ENCODE measurements at regions of chr6 and their contacts with region 1.

Region 1: DNA sequence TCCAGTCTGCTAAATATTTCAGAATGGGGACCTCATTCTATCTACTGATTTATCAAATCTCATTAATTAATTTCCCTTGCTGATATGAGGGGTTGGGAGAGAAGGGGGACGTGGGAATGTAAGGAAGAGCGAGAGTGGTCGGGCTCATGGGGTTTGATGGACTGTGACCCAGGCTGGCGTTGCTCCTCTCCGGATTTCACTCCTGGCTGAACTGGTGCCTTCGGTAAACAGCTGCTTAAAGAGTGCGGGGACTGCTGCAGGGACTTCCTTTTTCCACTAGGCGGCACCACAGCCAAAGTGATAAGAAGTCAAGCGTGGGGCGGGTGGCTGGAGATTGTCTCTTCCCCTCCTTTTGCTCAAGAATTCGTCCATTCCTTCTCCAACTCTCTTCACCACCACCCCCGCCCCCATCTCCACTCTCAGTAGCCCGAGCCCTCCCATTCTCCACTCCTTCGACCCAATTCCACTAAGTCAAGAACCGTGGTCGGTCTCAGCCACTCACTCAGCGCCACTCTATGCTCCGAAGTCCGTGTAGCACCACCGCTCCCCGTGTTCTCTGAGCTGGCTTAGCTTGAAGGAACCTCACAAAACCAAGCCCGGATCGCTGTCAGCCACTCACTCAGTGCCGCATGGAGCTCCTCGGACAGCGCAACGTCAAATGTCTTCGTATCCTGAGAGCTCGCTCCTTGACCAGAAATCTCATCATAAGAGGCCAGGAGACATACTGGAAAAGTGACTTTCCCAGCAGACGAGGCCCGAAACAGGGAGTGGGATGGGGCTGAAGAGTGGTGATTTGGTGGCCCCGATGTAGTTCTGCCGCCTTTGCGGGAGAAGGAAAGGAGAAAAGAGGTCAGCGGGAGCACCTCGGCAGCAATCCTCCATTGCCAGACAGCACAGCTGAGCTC is 9.7 kb downstream of the TRIM31 start:
- DNase-seq: peak; percentile 61 to 87 (median 83)
- ATAC-seq: peak; percentile 92
- H3K4me3 ChIP-seq: peak overlapping the region; percentile 68
- H3K4me3 Mint-ChIP-seq: peak overlapping the region; percentile 86 to 95 (median 91)
- H3K27ac ChIP-seq: peak overlapping the region; percentile 49
- H3K27ac Mint-ChIP-seq: peak overlapping the region; percentile 48 to 92 (median 85)
- H3K4me1 ChIP-seq: peaks cover 24 to 30% of the 10 kb centered on the region in 2 donors
- H3K4me1 Mint-ChIP-seq: peaks cover 36 to 51% (median 43%) of the 10 kb centered on the region in 7 donors
- H3K27me3 ChIP-seq: peaks cover 5 to 10% of the 10 kb centered on the region in 2 donors
- H3K27me3 Mint-ChIP-seq: peaks cover 25 to 69% (median 34%) of the 10 kb centered on the region in 5 donors

Region 2: GRCh38 chr6:29847871-29848630 is 255.2 kb before region 1 on chr6:
- CTCF ChIA-PET with region 1: no interaction called
- POLR2A ChIA-PET with region 1: no interaction called
- intact Hi-C with region 1: loop called in 1 of 2 experiments (anchors 1 kb)
- DNase-seq: peak; percentile 71 to 87 (median 80)
- ATAC-seq: peak; percentile 90
- H3K4me3 ChIP-seq: no peak overlapping the region
- H3K4me3 Mint-ChIP-seq: peak overlapping the region in 5 of 10 donors; percentile 5 to 49 (median 16)
- H3K27ac ChIP-seq: no peak overlapping the region
- H3K27ac Mint-ChIP-seq: peak overlapping the region in 1 of 9 donors; percentile 14
- H3K4me1 ChIP-seq: no peaks in the 10 kb centered on the region
- H3K4me1 Mint-ChIP-seq: peaks cover 0 to 24% (median 13%) of the 10 kb centered on the region in 7 donors
- H3K27me3 ChIP-seq: peaks cover 9 to 13% of the 10 kb centered on the region in 2 donors
- H3K27me3 Mint-ChIP-seq: peaks cover 54 to 73% (median 67%) of the 10 kb centered on the region in 5 donors

Region 3: GRCh38 chr6:30066577-30067459 is 36.4 kb before region 1 on chr6 and contains the start of gene PPP1R11:
- CTCF ChIA-PET with region 1: interaction called, 14 read pairs
- POLR2A ChIA-PET with region 1: interaction called, 36 read pairs
- intact Hi-C with region 1: loop called (anchors 1 kb)
- DNase-seq: peak; percentile 84 to 100 (median 99)
- ATAC-seq: peak; percentile 99
- H3K4me3 ChIP-seq: peak within 1 kb of the TSS; percentile 94
- H3K4me3 Mint-ChIP-seq: peak within 1 kb of the TSS; percentile 87 to 100 (median 98)
- H3K27ac ChIP-seq: peak within 1 kb of the TSS; percentile 96
- H3K27ac Mint-ChIP-seq: peak within 1 kb of the TSS; percentile 96 to 100 (median 99)
- H3K4me1 ChIP-seq: peaks cover 28 to 41% of the 10 kb centered on the region in 2 donors
- H3K4me1 Mint-ChIP-seq: peaks cover 43 to 77% (median 71%) of the 10 kb centered on the region in 7 donors
- H3K27me3 ChIP-seq: no peaks in the 10 kb centered on the region
- H3K27me3 Mint-ChIP-seq: peaks cover 10 to 22% (median 16%) of the 10 kb centered on the region in 5 donors
- total RNA-seq, gene PPP1R11: 49.4 to 67.1 (median 62.7) TPM

Region 4: DNA sequence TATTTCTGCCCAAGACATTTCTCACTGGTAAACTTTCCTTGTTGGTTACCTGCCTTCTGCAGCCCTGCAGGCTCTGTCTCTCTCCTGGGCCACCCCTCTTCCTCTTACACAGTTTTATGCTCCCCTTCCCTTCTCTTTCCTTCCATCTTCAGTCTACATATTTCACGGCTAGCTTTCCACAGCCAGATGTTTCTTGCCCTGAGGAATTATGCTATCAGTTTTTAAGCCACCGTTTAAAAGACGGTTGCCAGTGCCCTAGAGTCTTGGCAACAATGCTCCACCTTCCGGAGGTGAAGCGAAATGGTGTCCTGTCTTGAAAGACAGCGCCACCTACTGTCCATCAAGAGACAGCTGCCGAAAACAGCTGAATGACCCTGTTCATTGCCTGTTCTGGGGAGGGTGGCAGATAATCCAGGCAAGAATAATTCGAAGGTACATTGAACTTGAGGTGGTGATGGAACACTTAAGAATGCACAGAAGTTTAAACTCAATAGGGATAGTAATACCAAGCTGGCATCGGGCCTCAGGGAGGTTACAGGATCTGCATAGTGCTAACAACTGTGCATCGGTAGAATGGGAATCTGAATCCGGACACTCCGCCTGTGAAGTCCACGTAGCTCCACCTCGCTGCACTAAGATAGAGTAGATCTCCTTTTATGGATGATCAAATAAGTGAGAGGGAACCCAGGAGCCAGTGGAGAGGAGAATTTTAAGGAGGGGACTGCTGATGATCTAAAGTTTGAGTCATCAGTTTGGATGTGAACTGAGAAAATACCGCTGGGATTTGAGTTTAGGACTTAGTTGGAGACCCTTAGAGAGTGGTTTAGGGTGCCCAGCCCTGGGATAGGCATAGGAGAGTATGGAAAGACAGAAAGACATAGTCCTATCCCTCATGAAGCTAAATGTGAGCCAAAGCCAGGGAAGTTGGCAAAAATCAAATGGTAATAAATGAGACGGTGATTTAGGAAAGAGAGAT is 28.0 kb after region 1 on chr6:
- CTCF ChIA-PET with region 1: interaction called, 170 read pairs
- POLR2A ChIA-PET with region 1: interaction called, 29 read pairs
- intact Hi-C with region 1: loop called (anchors 1 kb)
- DNase-seq: peak; percentile 21 to 83 (median 76)
- ATAC-seq: peak; percentile 99
- H3K4me3 ChIP-seq: no peak overlapping the region
- H3K4me3 Mint-ChIP-seq: peak overlapping the region in 6 of 10 donors; percentile 2 to 44 (median 30)
- H3K27ac ChIP-seq: no peak overlapping the region
- H3K27ac Mint-ChIP-seq: peak overlapping the region in 3 of 9 donors; percentile 2 to 79 (median 7)
- H3K4me1 ChIP-seq: peaks cover 0 to 4% of the 10 kb centered on the region in 2 donors
- H3K4me1 Mint-ChIP-seq: peaks cover 3 to 23% (median 6%) of the 10 kb centered on the region in 7 donors
- H3K27me3 ChIP-seq: peaks cover 5 to 12% of the 10 kb centered on the region in 2 donors
- H3K27me3 Mint-ChIP-seq: peaks cover 63 to 83% (median 67%) of the 10 kb centered on the region in 5 donors

Region 5: DNA sequence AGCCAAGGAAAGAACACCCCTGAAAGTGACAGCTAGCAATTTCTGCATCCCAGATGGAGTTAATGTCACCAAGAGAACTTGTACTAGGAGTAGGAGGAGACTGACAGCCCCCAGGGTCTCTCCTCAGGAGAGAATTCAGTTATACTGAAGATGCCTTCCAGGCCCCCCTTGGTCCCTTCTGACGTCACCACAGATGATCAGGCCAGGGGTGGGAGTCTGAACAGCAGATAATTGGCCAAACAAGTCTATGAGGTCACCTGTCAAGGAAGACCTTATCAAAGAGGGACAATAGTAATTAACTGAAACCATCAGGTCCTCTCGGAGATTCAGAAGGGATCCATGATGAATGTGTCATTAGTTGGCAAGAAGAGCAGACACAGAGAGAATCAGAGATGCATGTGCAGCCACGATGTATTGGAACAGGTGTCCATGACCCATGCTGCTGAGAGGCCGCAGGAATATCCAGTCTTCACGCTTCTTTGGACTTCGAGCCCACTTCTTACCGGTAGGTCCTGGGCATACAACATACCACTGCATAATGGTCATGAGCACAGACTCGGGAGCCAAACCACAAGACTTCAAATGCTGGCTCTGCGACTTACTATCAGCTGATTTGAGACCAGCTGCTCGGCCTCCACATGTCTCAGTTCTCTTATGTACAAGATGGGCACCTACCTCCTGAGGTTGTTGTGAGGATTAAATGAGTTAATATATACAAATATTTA is 47.6 kb after region 1 on chr6:
- CTCF ChIA-PET with region 1: no interaction called
- POLR2A ChIA-PET with region 1: no interaction called
- intact Hi-C with region 1: no loop called
- DNase-seq: no peak
- ATAC-seq: no peak
- H3K4me3 ChIP-seq: no peak overlapping the region
- H3K4me3 Mint-ChIP-seq: no peak overlapping the region
- H3K27ac ChIP-seq: no peak overlapping the region
- H3K27ac Mint-ChIP-seq: no peak overlapping the region
- H3K4me1 ChIP-seq: no peaks in the 10 kb centered on the region
- H3K4me1 Mint-ChIP-seq: peaks cover 0 to 12% (median 4%) of the 10 kb centered on the region in 7 donors
- H3K27me3 ChIP-seq: no peaks in the 10 kb centered on the region
- H3K27me3 Mint-ChIP-seq: peaks cover 10 to 47% (median 26%) of the 10 kb centered on the region in 5 donors

Region 6: DNA sequence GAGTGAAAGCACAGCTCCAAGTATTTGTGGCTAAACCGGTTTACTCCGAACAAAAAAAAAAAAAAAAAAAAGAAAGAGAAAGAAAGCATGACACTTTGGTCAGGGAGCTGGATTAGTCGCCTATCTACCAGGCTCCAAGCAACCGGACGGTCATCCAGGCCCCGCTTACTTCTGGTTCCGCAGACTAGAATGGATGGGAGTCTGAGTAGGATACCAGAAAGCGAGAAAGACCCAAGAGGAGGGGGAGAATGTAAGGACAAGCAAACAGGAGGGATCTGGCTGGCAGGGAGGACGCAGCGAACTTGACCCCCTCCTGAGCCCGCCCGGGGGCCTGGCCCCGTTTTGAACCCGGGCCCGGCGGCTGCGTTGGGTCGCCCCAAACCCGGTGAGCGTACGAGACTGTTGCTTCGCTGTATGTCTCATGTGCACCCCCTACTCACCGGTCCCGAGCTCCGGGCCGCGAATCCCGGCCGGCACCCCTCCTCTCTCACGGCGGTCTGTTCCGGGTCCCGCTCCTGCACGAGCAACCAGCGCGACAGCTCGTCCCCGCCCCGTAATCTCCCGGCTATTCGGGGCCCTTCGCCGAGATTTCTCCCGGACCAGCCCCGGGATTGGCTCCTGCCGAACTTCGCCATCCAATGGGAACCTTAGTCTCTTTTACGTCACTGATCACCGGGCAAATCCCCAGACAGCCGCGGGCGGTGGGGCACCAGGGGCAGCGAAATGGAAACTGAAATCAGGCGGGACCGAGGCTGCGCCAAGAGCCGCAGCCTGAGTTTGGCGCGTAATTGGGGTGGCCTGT is 109.8 kb after region 1 on chr6 and contains the start of gene TRIM26:
- CTCF ChIA-PET with region 1: no interaction called
- POLR2A ChIA-PET with region 1: interaction called, 5 read pairs
- intact Hi-C with region 1: loop called (anchors 1 to 5 kb)
- DNase-seq: peak; percentile 88 to 99 (median 97)
- ATAC-seq: peak; percentile 94
- H3K4me3 ChIP-seq: peak within 1 kb of the TSS; percentile 83
- H3K4me3 Mint-ChIP-seq: peak within 1 kb of the TSS; percentile 89 to 100 (median 96)
- H3K27ac ChIP-seq: peak within 1 kb of the TSS; percentile 99
- H3K27ac Mint-ChIP-seq: peak within 1 kb of the TSS; percentile 96 to 100 (median 99)
- H3K4me1 ChIP-seq: peaks cover 32 to 39% of the 10 kb centered on the region in 2 donors
- H3K4me1 Mint-ChIP-seq: peaks cover 47 to 62% (median 52%) of the 10 kb centered on the region in 7 donors
- H3K27me3 ChIP-seq: no peaks in the 10 kb centered on the region
- H3K27me3 Mint-ChIP-seq: peaks cover 0 to 5% (median 0%) of the 10 kb centered on the region in 5 donors
- total RNA-seq, gene TRIM26: 40.1 to 73.1 (median 49.1) TPM

Region 7: DNA sequence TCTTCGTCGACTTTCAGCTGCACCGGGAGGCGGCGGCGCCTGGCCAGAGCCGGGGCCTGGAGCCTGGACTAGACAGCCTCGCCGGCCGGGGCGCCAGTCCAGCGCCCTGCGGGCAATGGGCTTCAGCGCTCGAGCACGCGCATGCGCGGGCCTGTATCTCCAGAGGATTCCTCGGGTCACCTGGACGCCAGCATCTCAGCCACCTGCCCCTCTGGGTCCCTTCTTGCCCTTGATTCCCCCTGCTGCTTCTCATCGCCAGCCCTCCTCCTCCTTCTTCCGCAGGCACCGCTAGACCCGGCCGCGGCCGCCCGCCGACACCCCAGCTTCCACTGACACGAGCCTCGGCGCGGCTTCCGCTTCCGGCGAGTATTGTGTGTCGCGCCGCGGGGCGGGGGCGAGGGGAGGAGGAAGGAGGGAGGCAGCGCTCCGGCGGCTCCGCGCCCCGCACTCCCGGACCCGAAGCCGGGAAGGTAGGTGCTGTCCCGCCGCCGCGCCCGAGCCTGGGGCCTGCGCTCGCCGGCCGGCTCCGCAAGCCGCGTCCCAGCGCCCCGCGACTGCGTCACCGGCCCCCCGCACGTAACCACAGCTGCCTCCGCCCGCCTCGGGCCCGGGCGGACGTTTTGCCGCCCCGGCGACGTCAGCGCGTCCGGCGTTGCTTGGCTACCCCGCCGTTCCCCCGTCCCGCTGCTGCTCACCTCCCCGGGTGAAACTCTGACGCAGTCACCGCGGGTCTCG is 223.5 kb after region 1 on chr6 and contains the start of gene TRIM39:
- CTCF ChIA-PET with region 1: no interaction called
- POLR2A ChIA-PET with region 1: no interaction called
- intact Hi-C with region 1: loop called in 1 of 2 experiments (anchors 5 kb)
- DNase-seq: peak; percentile 88 to 94 (median 92)
- ATAC-seq: peak; percentile 76
- H3K4me3 ChIP-seq: peak within 1 kb of the TSS; percentile 70
- H3K4me3 Mint-ChIP-seq: peak within 1 kb of the TSS; percentile 93 to 99 (median 97)
- H3K27ac ChIP-seq: peak within 1 kb of the TSS; percentile 100
- H3K27ac Mint-ChIP-seq: peak within 1 kb of the TSS; percentile 92 to 100 (median 99)
- H3K4me1 ChIP-seq: peaks cover 34 to 48% of the 10 kb centered on the region in 2 donors
- H3K4me1 Mint-ChIP-seq: peaks cover 42 to 70% (median 63%) of the 10 kb centered on the region in 7 donors
- H3K27me3 ChIP-seq: no peaks in the 10 kb centered on the region
- H3K27me3 Mint-ChIP-seq: no peaks in the 10 kb centered on the region
- total RNA-seq, gene TRIM39: 12.8 to 42.1 (median 26.4) TPM

Region 8: DNA sequence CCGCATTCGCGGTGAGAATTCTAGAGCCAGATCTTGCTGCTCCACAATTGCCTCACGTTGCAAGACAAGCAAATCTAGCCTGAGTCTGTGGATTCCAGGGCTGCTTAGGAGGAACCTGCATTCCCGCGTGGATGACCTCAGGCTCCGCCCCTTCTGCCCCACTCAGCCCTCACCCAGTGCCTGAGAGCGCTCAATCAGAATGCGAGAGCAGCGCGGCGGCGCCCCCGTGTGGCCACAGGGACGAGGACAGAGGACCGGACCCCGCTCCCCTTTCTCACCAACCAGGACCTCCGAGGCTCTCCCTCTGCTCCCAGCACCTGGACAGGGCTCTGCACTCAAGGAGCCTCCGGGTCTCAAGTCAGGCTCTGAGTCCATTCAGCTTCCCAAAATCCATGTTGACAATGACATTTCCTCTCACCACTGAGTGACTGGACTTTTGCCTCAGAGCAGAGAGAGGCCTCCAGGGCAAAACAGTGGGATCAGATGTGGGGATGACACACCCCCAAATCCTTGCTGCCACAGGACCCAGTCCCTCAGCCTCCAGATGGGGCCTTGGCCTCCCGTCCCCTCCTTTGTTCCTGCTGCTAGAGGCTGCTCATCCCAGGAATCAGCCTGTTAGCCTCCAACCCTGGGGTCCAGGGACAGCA is 293.7 kb after region 1 on chr6:
- CTCF ChIA-PET with region 1: no interaction called
- POLR2A ChIA-PET with region 1: no interaction called
- intact Hi-C with region 1: loop called in 1 of 2 experiments (anchors 1 kb)
- DNase-seq: peak; percentile 58 to 89 (median 76)
- ATAC-seq: peak; percentile 99
- H3K4me3 ChIP-seq: no peak overlapping the region
- H3K4me3 Mint-ChIP-seq: peak overlapping the region in 2 of 10 donors; percentile 39 to 44
- H3K27ac ChIP-seq: no peak overlapping the region
- H3K27ac Mint-ChIP-seq: peak overlapping the region in 1 of 9 donors; percentile 67
- H3K4me1 ChIP-seq: no peaks in the 10 kb centered on the region
- H3K4me1 Mint-ChIP-seq: peaks cover 0 to 6% (median 0%) of the 10 kb centered on the region in 7 donors
- H3K27me3 ChIP-seq: peaks cover 0 to 4% of the 10 kb centered on the region in 2 donors
- H3K27me3 Mint-ChIP-seq: peaks cover 20 to 51% (median 40%) of the 10 kb centered on the region in 5 donors

Measured in naive thymus-derived CD4-positive, alpha-beta T cell (primary cell).